ENCODE measurements at regions of chr17 and their contacts with region 1.

Region 1: GRCh38 chr17:9729034-9729650 is 62.2 kb downstream of the DHRS7C start:
- DNase-seq: no peak
- H3K4me3 ChIP-seq: no peak overlapping the region
- H3K27ac ChIP-seq: no peak overlapping the region
- H3K4me1 ChIP-seq: no peaks in the 10 kb centered on the region
- H3K27me3 ChIP-seq: no peaks in the 10 kb centered on the region
- CTCF ChIP-seq: peak; percentile 93 to 98 (median 97)
- EP300 ChIP-seq: no peak
- POLR2A ChIP-seq: no peak

Region 2: DNA sequence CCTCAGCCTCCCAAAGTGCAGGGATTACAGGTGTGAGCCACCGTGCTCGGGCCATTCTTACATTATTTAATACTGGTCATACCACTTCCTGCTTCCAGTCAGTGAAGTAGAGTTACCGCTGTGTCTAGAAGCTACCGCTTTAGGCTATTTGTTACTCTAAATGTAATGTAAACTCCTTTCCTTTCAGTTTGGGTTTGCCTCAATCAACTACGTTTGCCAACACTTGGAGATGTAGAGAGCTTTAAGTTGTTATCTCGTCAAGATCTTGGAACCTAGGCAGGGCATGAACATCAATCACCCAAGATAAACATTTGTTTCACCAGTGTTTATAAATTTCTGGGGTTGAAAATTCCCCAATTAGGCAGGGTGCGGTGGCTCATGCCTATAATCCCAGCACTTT is 429.5 kb before region 1 on chr17:
- in situ Hi-C with region 1: no loop called
- intact Hi-C with region 1: loop called (anchors 5 kb)
- DNase-seq: no peak
- H3K4me3 ChIP-seq: no peak overlapping the region
- H3K27ac ChIP-seq: no peak overlapping the region
- H3K4me1 ChIP-seq: peaks cover 0 to 4% (median 0%) of the 10 kb centered on the region in 4 donors
- H3K27me3 ChIP-seq: no peaks in the 10 kb centered on the region
- CTCF ChIP-seq: no peak
- EP300 ChIP-seq: no peak
- POLR2A ChIP-seq: no peak

Region 3: DNA sequence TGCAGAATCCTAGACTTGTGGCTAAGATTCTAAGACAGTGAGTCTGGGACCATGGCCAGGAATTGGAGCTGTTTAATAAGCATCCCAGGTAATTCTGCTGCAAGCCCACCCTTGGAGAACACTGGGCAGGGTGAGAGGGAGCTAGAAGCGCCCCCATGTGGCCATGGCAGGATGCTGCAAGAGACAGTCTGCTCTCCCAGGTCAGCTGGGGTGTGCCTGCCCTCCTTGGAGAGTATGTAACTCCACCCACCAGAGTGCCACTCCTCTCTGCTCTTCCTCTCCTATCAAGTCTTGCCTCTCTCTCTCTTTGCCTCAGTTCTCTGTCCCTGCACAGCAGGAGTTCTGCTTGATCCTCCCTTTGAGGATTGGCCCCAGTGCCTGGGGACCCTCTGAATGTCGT is 161.0 kb after region 1 on chr17:
- in situ Hi-C with region 1: loop called in 1 of 4 experiments (anchors 25 kb)
- intact Hi-C with region 1: no loop called
- DNase-seq: no peak
- H3K4me3 ChIP-seq: no peak overlapping the region
- H3K27ac ChIP-seq: no peak overlapping the region
- H3K4me1 ChIP-seq: no peaks in the 10 kb centered on the region
- H3K27me3 ChIP-seq: no peaks in the 10 kb centered on the region
- CTCF ChIP-seq: peak in 4 of 5 experiments; percentile 28 to 36 (median 31)
- EP300 ChIP-seq: no peak
- POLR2A ChIP-seq: no peak